Breast epithelium (tissue), 4 donors: ENCODE measurements at regions of chr14 and their contacts with region 1.

Region 1: DNA sequence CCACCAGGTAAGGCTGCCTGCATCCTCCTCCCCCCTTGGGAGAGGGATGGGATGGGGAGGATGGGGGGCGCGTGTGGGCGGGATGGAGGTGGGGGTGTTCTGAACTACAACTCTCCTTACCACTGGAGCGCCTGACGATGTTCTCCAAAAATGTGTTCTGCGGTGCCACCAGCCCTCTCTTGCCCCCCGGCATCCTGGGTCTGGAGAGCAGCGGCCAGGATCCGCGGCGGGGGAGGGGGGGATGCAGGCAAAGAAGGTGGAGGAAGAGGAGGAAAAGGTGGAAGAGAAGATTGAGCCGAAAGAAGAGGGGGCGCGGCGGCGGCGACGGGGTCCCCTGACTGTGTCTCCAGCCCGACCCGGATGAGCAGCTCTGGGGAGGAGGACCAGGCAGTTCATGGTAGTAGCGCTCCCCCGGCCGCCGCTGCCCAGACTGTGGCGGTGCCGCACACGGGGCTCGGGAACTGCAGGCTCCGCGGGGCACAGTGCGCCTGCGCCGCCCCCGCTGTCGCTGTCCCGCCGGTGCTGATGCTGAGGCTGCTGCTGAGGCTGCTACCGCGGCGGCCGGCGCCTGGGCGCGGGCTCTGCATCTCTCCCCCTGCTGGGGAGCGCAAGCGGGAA is at the start of gene KCNH5:
- DNase-seq: no peak
- H3K4me3 ChIP-seq: peak within 1 kb of the TSS; percentile 3 to 64 (median 43)
- H3K27ac ChIP-seq: no peak within 1 kb of the TSS
- H3K4me1 ChIP-seq: peaks cover 0 to 6% of the 10 kb centered on the region in 2 donors
- H3K27me3 ChIP-seq: peaks cover 3 to 60% of the 10 kb centered on the region in 2 donors
- CTCF ChIP-seq: no peak
- POLR2A ChIP-seq: no peak
- total RNA-seq, gene KCNH5: 0.33 to 0.88 TPM in 2 of 3 donors, not detected in the other

Region 2: DNA sequence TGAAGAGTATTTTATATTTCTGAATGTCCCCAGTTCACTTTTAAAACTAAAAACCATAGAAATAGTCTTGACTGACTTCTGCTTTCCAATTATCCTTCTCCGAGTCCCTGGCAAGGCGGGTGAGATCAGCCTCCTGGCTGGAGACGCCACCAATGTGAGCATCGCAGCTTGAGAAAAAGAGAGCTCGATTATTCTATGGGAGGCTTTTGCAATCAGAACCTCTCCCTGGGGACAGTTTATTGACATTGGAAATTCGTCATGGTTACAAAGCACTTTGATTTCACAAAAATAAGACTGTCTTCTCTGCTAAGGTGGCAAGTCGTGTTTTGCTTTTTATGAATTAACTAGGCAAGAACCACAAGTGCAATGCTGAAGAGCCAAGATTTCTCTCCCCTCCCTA is 297.3 kb after region 1 on chr14:
- intact Hi-C with region 1: loop called (anchors 10 kb)
- DNase-seq: no peak
- H3K4me3 ChIP-seq: no peak overlapping the region
- H3K27ac ChIP-seq: no peak overlapping the region
- H3K4me1 ChIP-seq: no peaks in the 10 kb centered on the region
- H3K27me3 ChIP-seq: no peaks in the 10 kb centered on the region
- CTCF ChIP-seq: no peak
- POLR2A ChIP-seq: no peak